GM10248 (cell line): ENCODE measurements at regions of chr7 and their contacts with region 1.

Region 1: GRCh38 chr7:142535123-142535779 is 214.0 kb upstream of the PRSS1 start:
- DNase-seq: peak; percentile 62
- CTCF ChIP-seq: peak; percentile 85

Region 2: GRCh38 chr7:142459551-142459963 is 75.7 kb before region 1 on chr7:
- CTCF ChIA-PET with region 1: interaction called, 11 read pairs
- POLR2A ChIA-PET with region 1: no interaction called
- DNase-seq: peak; percentile 52
- CTCF ChIP-seq: peak; percentile 67

Region 3: DNA sequence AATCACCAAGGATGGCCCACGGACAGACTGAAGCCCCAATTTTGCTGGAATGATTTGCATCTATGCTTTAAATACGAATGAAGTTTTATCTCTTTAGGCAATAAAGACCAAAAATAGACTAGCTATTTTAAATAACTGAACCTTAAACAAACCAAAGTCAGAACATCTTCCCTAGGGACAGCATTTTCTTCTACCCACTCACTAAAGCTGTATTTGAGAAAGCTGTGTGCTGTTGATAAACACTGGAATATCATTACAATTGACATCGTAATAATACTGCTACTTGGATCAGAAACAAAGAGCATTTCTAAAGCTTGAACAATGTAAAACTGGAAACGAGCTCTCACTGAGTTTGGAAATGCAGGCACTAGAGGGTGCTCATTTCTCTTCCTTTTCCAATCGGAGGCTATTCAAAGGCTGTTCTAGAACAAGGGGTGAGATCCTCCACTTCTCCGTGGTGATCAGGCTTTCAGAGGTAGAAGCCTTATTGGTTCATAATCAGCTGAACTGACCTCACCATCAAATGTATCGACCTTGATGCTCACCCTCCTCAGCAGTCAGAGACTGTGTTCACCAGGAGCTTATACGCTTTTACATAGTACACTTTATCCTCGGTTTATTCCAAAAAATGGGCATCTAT is 11.3 kb before region 1 on chr7:
- CTCF ChIA-PET with region 1: interaction called, 72 read pairs
- POLR2A ChIA-PET with region 1: no interaction called
- DNase-seq: no peak
- CTCF ChIP-seq: no peak

Region 4: GRCh38 chr7:142587578-142588191 is 52.4 kb after region 1 on chr7:
- CTCF ChIA-PET with region 1: interaction called, 56 read pairs
- POLR2A ChIA-PET with region 1: no interaction called
- DNase-seq: peak; percentile 71
- CTCF ChIP-seq: peak; percentile 72

Region 5: GRCh38 chr7:142603870-142604448 is 68.7 kb after region 1 on chr7:
- CTCF ChIA-PET with region 1: interaction called, 20 read pairs
- POLR2A ChIA-PET with region 1: no interaction called
- DNase-seq: peak; percentile 62
- CTCF ChIP-seq: peak; percentile 81

Region 6: GRCh38 chr7:142632291-142633134 is 97.3 kb after region 1 on chr7:
- CTCF ChIA-PET with region 1: interaction called, 17 read pairs
- POLR2A ChIA-PET with region 1: no interaction called
- DNase-seq: peak; percentile 79
- CTCF ChIP-seq: peak; percentile 79